ENCODE measurements at regions of chr14 and their contacts with region 1.

Region 1: DNA sequence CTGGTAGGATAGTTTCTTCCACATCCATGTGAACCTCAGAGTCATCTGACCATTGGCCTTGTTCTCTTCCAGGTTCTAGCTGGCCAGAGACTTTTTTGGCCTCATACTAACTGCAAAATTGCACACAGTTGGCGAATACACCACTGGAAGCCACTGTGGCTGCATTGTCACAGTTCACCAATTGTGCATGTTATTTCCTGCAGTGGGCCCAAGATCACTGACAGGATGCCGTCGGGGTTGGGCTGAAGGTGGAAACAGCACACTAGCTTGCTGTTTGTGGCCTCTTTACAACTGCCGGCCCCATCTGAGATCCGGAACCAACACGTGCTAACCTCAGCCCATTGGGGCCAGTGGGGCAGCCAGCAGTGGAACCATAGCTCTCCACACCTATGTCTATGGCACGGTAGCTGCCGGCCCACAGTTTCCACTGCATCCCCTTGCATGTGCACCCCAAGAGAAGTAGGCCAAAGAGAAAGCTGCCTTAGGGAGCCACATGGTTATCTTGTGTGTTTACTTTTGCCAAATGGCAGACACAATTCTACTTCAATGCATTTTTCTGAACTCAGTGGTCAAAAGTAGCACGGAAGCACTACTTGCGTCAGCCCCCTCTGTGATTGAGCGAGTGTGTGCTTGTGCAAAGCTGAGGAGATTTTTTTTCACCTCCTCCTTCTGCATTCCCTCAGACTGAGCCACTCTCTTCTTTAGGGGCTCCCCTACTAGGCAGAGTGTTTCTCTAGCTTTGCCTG is 464.0 kb downstream of the RAD51B start:
- DNase-seq: peak; percentile 87
- ATAC-seq: peak; percentile 69
- H3K4me3 ChIP-seq: peak overlapping the region in 3 of 5 experiments; percentile 5 to 31 (median 7)
- H3K4me3 Mint-ChIP-seq: peak overlapping the region; percentile 83
- H3K27ac ChIP-seq: peak overlapping the region; percentile 91 to 98
- H3K27ac Mint-ChIP-seq: peak overlapping the region; percentile 98
- H3K4me1 ChIP-seq: peaks cover 93 to 96% of the 10 kb centered on the region in 2 donors
- H3K4me1 Mint-ChIP-seq: peaks cover 95% of the 10 kb centered on the region
- H3K27me3 ChIP-seq: no peaks in the 10 kb centered on the region
- H3K27me3 Mint-ChIP-seq: no peaks in the 10 kb centered on the region
- CTCF ChIP-seq: no peak

Region 2: GRCh38 chr14:68297876-68298469 is 14.4 kb after region 1 on chr14:
- CTCF ChIA-PET with region 1: interaction called, 15 read pairs
- POLR2A ChIA-PET with region 1: interaction called, 10 read pairs
- intact Hi-C with region 1: loop called (anchors 1 kb)
- DNase-seq: peak; percentile 5
- ATAC-seq: no peak
- H3K4me3 ChIP-seq: no peak overlapping the region
- H3K4me3 Mint-ChIP-seq: no peak overlapping the region
- H3K27ac ChIP-seq: peak overlapping the region in 1 of 2 donors; percentile 15
- H3K27ac Mint-ChIP-seq: peak overlapping the region; percentile 72
- H3K4me1 ChIP-seq: peaks cover 38 to 41% of the 10 kb centered on the region in 2 donors
- H3K4me1 Mint-ChIP-seq: peaks cover 60% of the 10 kb centered on the region
- H3K27me3 ChIP-seq: no peaks in the 10 kb centered on the region
- H3K27me3 Mint-ChIP-seq: no peaks in the 10 kb centered on the region
- CTCF ChIP-seq: no peak

Region 3: DNA sequence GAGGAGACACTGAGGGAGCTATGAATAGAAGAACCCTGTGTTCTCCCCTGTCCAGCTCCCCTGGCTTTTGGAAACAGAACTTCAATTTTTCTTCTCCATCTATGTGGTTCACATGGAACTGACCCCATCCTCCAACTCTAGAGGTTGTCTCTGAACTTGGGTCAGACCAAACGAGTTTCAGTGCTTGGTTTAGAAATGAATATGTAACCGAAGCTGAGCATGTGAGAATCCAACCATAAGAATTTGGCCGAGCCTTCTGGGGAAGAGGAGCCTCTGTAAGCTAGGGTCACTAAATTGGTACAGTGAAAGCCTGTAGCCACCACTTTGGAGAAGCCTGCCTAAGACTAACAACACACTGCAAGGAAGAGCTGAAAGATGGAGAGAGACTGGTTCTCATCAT is 45.0 kb after region 1 on chr14:
- CTCF ChIA-PET with region 1: interaction called, 3 read pairs
- POLR2A ChIA-PET with region 1: interaction called, 7 read pairs
- intact Hi-C with region 1: loop called (anchors 2 kb)
- DNase-seq: no peak
- ATAC-seq: no peak
- H3K4me3 ChIP-seq: no peak overlapping the region
- H3K4me3 Mint-ChIP-seq: no peak overlapping the region
- H3K27ac ChIP-seq: no peak overlapping the region
- H3K27ac Mint-ChIP-seq: no peak overlapping the region
- H3K4me1 ChIP-seq: peaks cover 47 to 53% of the 10 kb centered on the region in 2 donors
- H3K4me1 Mint-ChIP-seq: peaks cover 59% of the 10 kb centered on the region
- H3K27me3 ChIP-seq: no peaks in the 10 kb centered on the region
- H3K27me3 Mint-ChIP-seq: no peaks in the 10 kb centered on the region
- CTCF ChIP-seq: no peak

Region 4: GRCh38 chr14:68401855-68402254 is 118.3 kb after region 1 on chr14:
- CTCF ChIA-PET with region 1: interaction called, 13 read pairs
- POLR2A ChIA-PET with region 1: interaction called, 7 read pairs
- intact Hi-C with region 1: loop called (anchors 1 kb)
- DNase-seq: peak; percentile 71
- ATAC-seq: peak; percentile 59
- H3K4me3 ChIP-seq: peak overlapping the region in 1 of 5 experiments; percentile 57
- H3K4me3 Mint-ChIP-seq: peak overlapping the region; percentile 82
- H3K27ac ChIP-seq: peak overlapping the region; percentile 91 to 96
- H3K27ac Mint-ChIP-seq: peak overlapping the region; percentile 97
- H3K4me1 ChIP-seq: peaks cover 91 to 94% of the 10 kb centered on the region in 2 donors
- H3K4me1 Mint-ChIP-seq: peaks cover 90% of the 10 kb centered on the region
- H3K27me3 ChIP-seq: no peaks in the 10 kb centered on the region
- H3K27me3 Mint-ChIP-seq: no peaks in the 10 kb centered on the region
- CTCF ChIP-seq: no peak

Region 5: GRCh38 chr14:68506021-68506644 is 222.6 kb after region 1 on chr14:
- CTCF ChIA-PET with region 1: interaction called, 3 read pairs
- POLR2A ChIA-PET with region 1: interaction called, 7 read pairs
- intact Hi-C with region 1: loop called (anchors 5 kb)
- DNase-seq: no peak
- ATAC-seq: no peak
- H3K4me3 ChIP-seq: no peak overlapping the region
- H3K4me3 Mint-ChIP-seq: peak overlapping the region; percentile 40
- H3K27ac ChIP-seq: peak overlapping the region; percentile 79 to 88
- H3K27ac Mint-ChIP-seq: peak overlapping the region; percentile 89
- H3K4me1 ChIP-seq: peaks cover 73 to 86% of the 10 kb centered on the region in 2 donors
- H3K4me1 Mint-ChIP-seq: peaks cover 83% of the 10 kb centered on the region
- H3K27me3 ChIP-seq: no peaks in the 10 kb centered on the region
- H3K27me3 Mint-ChIP-seq: no peaks in the 10 kb centered on the region
- CTCF ChIP-seq: no peak

Region 6: GRCh38 chr14:68685419-68686204 is 402.1 kb after region 1 on chr14:
- CTCF ChIA-PET with region 1: interaction called, 9 read pairs
- POLR2A ChIA-PET with region 1: interaction called, 13 read pairs
- intact Hi-C with region 1: loop called (anchors 1 kb)
- DNase-seq: peak; percentile 95
- ATAC-seq: peak; percentile 81
- H3K4me3 ChIP-seq: peak overlapping the region in 2 of 5 experiments; percentile 18 to 45
- H3K4me3 Mint-ChIP-seq: peak overlapping the region; percentile 82
- H3K27ac ChIP-seq: peak overlapping the region; percentile 94 to 98
- H3K27ac Mint-ChIP-seq: peak overlapping the region; percentile 99
- H3K4me1 ChIP-seq: peaks cover 70 to 83% of the 10 kb centered on the region in 2 donors
- H3K4me1 Mint-ChIP-seq: peaks cover 90% of the 10 kb centered on the region
- H3K27me3 ChIP-seq: no peaks in the 10 kb centered on the region
- H3K27me3 Mint-ChIP-seq: no peaks in the 10 kb centered on the region
- CTCF ChIP-seq: no peak

Measured in B cell (primary cell).